Activated CD8-positive, alpha-beta T cell treated with anti-CD3 and anti-CD28 coated beads for 36 hours (primary cell): ENCODE measurements at regions of chr5 and their contacts with region 1.

Region 1: GRCh38 chr5:179763215-179763945 is 30.4 kb upstream of the LTC4S start:
- DNase-seq: peak; percentile 74
- ATAC-seq: peak; percentile 60
- H3K4me3 Mint-ChIP-seq: no peak overlapping the region
- H3K27ac Mint-ChIP-seq: no peak overlapping the region
- H3K4me1 Mint-ChIP-seq: peaks cover 54% of the 10 kb centered on the region
- H3K27me3 Mint-ChIP-seq: no peaks in the 10 kb centered on the region
- CTCF ChIP-seq: peak; percentile 99

Region 2: DNA sequence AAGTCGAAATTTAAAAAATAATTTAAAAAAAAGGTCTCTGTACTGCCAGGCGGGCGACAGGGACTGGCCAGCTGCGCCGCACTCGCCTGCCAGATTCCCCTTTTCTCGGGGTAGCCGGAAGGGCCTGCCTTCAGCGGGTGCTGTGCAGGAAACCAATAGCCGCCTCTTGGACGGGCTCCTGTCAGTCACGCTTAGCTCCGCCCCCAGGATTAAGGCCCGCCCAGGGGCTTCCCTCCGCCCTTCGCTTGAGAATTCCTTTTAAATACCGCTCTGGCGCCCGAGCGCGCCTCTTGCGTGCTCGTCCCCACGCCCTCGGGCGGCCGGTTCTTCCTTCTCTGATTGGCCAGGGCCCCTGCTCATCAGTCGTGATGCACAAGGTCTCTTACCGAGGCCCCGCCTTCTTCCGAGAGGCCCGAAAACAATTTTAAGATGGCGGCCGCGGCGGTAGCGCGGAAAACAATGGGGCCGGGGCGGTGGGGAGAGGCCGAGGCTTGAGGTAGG is 30.9 kb before region 1 on chr5 and contains the start of gene MAML1:
- CTCF ChIA-PET with region 1: interaction called, 30 read pairs
- POLR2A ChIA-PET with region 1: interaction called, 3 read pairs
- intact Hi-C with region 1: no loop called
- DNase-seq: peak; percentile 100
- ATAC-seq: peak; percentile 96
- H3K4me3 Mint-ChIP-seq: peak within 1 kb of the TSS; percentile 97
- H3K27ac Mint-ChIP-seq: peak within 1 kb of the TSS; percentile 94
- H3K4me1 Mint-ChIP-seq: peaks cover 43% of the 10 kb centered on the region
- H3K27me3 Mint-ChIP-seq: no peaks in the 10 kb centered on the region
- CTCF ChIP-seq: no peak
- total RNA-seq, gene MAML1: 26.1 to 26.6 TPM

Region 3: GRCh38 chr5:179749857-179750508 is 13.4 kb before region 1 on chr5:
- CTCF ChIA-PET with region 1: interaction called, 19 read pairs
- POLR2A ChIA-PET with region 1: interaction called, 6 read pairs
- intact Hi-C with region 1: no loop called
- DNase-seq: no peak
- ATAC-seq: no peak
- H3K4me3 Mint-ChIP-seq: no peak overlapping the region
- H3K27ac Mint-ChIP-seq: no peak overlapping the region
- H3K4me1 Mint-ChIP-seq: peaks cover 36% of the 10 kb centered on the region
- H3K27me3 Mint-ChIP-seq: no peaks in the 10 kb centered on the region
- CTCF ChIP-seq: no peak

Region 4: DNA sequence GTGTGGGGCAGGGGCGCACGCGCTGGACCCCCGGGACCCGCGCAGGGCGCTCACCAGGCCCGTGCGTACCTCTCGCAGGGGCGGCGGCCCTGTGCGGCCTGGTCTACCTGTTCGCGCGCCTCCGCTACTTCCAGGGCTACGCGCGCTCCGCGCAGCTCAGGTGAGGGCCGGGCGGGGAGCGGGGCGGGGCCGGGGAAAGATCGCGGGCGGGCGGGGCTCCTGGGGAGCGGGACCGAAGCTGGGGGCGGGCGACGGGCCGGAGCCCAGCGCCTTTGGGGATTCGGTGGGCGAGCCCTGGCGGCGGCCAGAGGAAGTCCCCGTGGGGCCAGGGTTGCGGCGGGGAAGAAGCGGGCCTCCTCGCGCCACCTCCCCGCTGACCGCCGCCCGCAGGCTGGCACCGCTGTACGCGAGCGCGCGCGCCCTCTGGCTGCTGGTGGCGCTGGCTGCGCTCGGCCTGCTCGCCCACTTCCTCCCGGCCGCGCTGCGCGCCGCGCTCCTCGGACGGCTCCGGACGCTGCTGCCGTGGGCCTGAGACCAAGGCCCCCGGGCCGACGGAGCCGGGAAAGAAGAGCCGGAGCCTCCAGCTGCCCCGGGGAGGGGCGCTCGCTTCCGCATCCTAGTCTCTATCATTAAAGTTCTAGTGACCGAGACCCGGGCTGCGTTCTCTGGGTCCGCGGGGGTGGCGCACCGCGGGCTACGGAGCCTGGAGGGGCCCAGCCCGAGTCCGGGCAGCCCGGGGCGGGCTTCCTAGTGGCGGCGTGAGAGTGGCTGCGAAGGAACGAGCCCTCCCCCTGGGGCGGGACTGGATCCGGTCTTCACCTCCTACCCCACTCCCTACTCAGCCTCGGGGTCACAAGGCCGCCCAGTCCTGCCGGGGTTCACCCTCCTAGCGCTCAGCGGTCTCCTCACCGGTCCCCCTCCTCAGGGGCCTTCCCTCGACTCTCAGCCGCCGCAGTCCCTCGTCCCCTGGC is 32.8 kb after region 1 on chr5:
- CTCF ChIA-PET with region 1: interaction called, 21 read pairs
- POLR2A ChIA-PET with region 1: interaction called, 3 read pairs
- intact Hi-C with region 1: loop called (anchors 5 kb)
- DNase-seq: peak; percentile 71
- ATAC-seq: peak; percentile 65
- H3K4me3 Mint-ChIP-seq: peak overlapping the region; percentile 67
- H3K27ac Mint-ChIP-seq: no peak overlapping the region
- H3K4me1 Mint-ChIP-seq: peaks cover 26% of the 10 kb centered on the region
- H3K27me3 Mint-ChIP-seq: no peaks in the 10 kb centered on the region
- CTCF ChIP-seq: peak; percentile 74

Region 5: GRCh38 chr5:179907570-179908324 is 144.4 kb after region 1 on chr5 and contains the start of gene TBC1D9B:
- CTCF ChIA-PET with region 1: interaction called, 12 read pairs
- POLR2A ChIA-PET with region 1: no interaction called
- intact Hi-C with region 1: no loop called
- DNase-seq: peak; percentile 57
- ATAC-seq: peak; percentile 94
- H3K4me3 Mint-ChIP-seq: peak within 1 kb of the TSS; percentile 90
- H3K27ac Mint-ChIP-seq: peak within 1 kb of the TSS; percentile 82
- H3K4me1 Mint-ChIP-seq: peaks cover 14% of the 10 kb centered on the region
- H3K27me3 Mint-ChIP-seq: no peaks in the 10 kb centered on the region
- CTCF ChIP-seq: peak; percentile 32
- total RNA-seq, gene TBC1D9B: 92.4 to 94.6 TPM